GM18951 (cell line): ENCODE measurements at regions of chr7 and their contacts with region 1.

Region 1: GRCh38 chr7:35906191-35906908 is 105.5 kb downstream of the SEPTIN7 start:
- POLR2A ChIP-seq: no peak

Region 2: GRCh38 chr7:35356495-35356894 is 549.9 kb before region 1 on chr7:
- in situ Hi-C with region 1: no loop called
- POLR2A ChIP-seq: no peak

Region 3: GRCh38 chr7:35424869-35425495 is 481.4 kb before region 1 on chr7:
- in situ Hi-C with region 1: no loop called
- POLR2A ChIP-seq: no peak

Region 4: GRCh38 chr7:35707422-35707821 is 198.9 kb before region 1 on chr7:
- in situ Hi-C with region 1: loop called (anchors 5 kb)
- POLR2A ChIP-seq: no peak